Activated CD4-positive, alpha-beta memory T cell treated with anti-CD3 and anti-CD28 coated beads, Interleukin-2, amount 10 ng/mL, durations not matched to agents 7 days and 5 days (primary cell): ENCODE measurements at regions of chr16 and their contacts with region 1.

Region 1: GRCh38 chr16:20774703-20775362 is 11.0 kb downstream of the ACSM3 start:
- DNase-seq: peak; percentile 78
- H3K4me3 Mint-ChIP-seq: no peak overlapping the region
- H3K27ac Mint-ChIP-seq: no peak overlapping the region
- H3K4me1 Mint-ChIP-seq: peaks cover 16% of the 10 kb centered on the region
- H3K27me3 Mint-ChIP-seq: no peaks in the 10 kb centered on the region

Region 2: GRCh38 chr16:20676268-20676825 is 98.5 kb before region 1 on chr16:
- CTCF ChIA-PET with region 1: no interaction called
- POLR2A ChIA-PET with region 1: no interaction called
- DNase-seq: no peak
- H3K4me3 Mint-ChIP-seq: no peak overlapping the region
- H3K27ac Mint-ChIP-seq: no peak overlapping the region
- H3K4me1 Mint-ChIP-seq: peaks cover 18% of the 10 kb centered on the region
- H3K27me3 Mint-ChIP-seq: peaks cover 1% of the 10 kb centered on the region

Region 3: GRCh38 chr16:20711277-20711911 is 63.4 kb before region 1 on chr16:
- CTCF ChIA-PET with region 1: no interaction called
- POLR2A ChIA-PET with region 1: no interaction called
- DNase-seq: no peak
- H3K4me3 Mint-ChIP-seq: no peak overlapping the region
- H3K27ac Mint-ChIP-seq: no peak overlapping the region
- H3K4me1 Mint-ChIP-seq: no peaks in the 10 kb centered on the region
- H3K27me3 Mint-ChIP-seq: no peaks in the 10 kb centered on the region

Region 4: GRCh38 chr16:20763461-20764232 is 11.2 kb before region 1 on chr16 and contains the start of gene ACSM3:
- CTCF ChIA-PET with region 1: interaction called, 13 read pairs
- POLR2A ChIA-PET with region 1: interaction called, 4 read pairs
- DNase-seq: peak; percentile 73
- H3K4me3 Mint-ChIP-seq: peak within 1 kb of the TSS; percentile 83
- H3K27ac Mint-ChIP-seq: peak within 1 kb of the TSS; percentile 81
- H3K4me1 Mint-ChIP-seq: peaks cover 23% of the 10 kb centered on the region
- H3K27me3 Mint-ChIP-seq: no peaks in the 10 kb centered on the region
- total RNA-seq, gene ACSM3: 3.6 to 4.3 TPM